HEK293T (cell line): ENCODE measurements at regions of chr7 and their contacts with region 1.

Region 1: DNA sequence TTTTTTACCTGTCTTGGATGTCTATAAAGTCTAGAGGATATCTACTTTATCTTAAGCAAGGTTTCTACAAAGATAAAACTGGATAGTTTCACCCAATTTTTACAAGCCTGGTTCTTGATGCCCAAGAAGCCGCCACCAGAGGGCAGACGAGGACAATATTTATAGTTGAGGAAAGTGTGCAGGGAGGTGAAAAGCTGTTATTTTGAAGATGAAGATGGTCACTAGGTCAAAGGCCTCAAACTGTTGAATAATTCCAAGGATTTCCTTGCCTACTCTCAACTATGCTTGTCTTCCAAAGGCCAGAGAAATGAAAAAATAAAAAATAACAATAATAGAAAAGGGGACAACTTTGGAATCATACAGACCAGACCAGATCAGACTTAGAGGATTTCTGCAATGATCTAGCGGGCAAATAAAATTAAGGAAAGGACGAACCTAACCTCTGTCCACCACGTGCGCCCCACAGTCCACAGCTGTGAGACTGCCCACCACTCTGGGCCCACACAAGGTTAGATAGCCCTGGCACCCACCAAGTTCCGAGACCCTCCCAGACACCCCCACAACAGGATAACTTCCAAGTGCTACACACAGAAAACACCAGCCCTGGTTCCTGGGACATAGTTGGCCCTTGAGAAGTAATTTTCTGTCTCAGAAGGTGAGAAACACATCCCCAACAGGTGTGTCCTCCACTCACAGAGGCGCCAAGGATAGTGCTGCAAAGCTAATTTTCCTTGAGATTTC is 2.8 kb downstream of the PKD1L1 start:
- DNase-seq: peak; percentile 35

Region 2: DNA sequence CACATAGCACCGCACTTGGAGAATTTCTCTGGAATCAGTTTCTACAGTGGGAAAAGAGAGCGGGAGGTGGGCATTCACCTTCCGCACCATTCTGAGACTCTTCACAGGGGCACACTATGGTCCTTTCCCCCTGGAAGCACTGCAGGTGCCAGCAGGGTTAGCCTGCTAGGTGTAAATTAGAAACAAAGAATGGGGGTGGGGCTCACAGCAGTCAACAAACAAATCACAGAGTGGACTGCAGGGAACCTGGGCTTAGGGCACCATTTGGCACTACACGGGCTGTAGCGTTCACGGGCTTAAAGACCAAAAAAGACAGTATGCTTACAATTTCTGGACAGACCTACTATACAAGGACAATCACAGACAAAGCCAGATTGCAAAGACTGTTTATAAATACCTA is 10.8 kb after region 1 on chr7:
- CTCF ChIA-PET with region 1: no interaction called
- POLR2A ChIA-PET with region 1: no interaction called
- DNase-seq: no peak

Region 3: GRCh38 chr7:47968847-47969774 is 23.7 kb after region 1 on chr7:
- CTCF ChIA-PET with region 1: interaction called, 18 read pairs
- POLR2A ChIA-PET with region 1: no interaction called
- DNase-seq: peak; percentile 75

Region 4: DNA sequence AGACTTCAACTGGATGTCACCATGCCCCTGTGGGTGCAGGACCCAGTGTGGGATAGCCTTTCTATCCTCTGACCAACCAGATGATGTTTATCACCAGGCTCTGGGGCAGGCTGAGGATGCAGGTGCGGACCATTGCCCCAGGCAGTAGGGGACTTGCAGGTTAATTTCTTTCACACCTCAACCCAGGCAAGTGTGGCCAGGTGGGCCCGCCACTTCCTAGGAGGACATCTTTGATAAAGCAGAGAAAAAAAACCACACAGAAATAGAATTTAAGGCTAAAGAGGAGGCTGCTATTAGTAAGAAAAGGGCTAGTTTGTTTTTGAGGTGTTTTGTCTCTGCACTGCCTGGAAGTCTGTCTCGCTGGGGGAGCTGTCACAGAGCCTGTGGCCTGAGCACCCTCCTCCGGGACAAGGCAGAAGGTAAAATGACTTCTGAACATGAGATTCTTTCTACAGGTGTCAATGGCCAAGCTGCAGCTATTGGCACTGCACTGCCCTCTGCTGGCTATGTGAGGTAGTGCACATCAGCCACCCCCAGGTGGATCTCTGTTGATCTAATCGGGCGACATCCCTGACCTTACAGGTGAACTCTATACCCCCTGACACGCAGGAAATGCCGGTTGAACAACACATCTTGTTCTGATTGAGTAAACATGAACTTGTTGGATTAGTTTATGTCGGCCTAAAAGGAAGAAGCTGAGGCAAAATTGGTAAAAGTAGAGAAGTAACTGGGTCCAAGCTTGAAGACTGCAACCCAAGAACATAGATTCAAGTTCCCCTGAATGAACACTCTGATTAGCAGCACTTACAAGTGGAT is 164.6 kb after region 1 on chr7:
- CTCF ChIA-PET with region 1: interaction called, 16 read pairs
- POLR2A ChIA-PET with region 1: no interaction called
- DNase-seq: peak; percentile 69

Region 5: DNA sequence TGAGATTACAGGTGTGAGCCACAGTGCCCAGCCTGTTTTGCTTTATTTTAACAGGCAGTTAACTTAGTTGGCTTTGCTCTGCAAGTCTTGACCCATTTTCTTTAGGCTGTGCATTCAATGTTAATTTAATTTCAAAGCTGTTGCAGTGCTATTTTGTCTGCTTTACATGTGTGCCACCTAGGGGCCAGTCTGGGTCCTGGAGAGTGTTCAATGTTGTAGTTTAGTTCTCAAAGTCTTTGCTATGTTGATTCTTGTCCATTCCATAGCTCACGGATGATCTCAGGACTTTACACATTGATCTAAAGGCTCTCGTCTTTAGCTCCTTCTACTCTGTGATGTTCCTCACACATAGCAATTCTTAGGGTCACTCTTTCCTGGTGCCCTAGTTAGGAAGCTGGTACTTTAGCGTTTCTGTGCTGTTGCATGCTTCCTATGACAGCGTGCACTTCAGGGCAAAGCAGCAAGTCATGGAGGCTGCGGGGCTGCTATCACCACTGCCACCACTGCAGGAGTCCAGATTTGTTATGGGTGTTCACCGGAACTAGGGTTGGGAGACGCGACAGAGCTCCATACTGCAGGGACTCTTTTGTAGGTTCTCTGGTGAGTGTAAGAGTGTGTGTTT is 209.5 kb after region 1 on chr7:
- CTCF ChIA-PET with region 1: interaction called, 11 read pairs
- POLR2A ChIA-PET with region 1: no interaction called
- DNase-seq: peak; percentile 42

Region 6: GRCh38 chr7:48224042-48224441 is 278.6 kb after region 1 on chr7:
- CTCF ChIA-PET with region 1: no interaction called
- POLR2A ChIA-PET with region 1: no interaction called
- DNase-seq: no peak